IMR-90 (cell line): ENCODE measurements at regions of chr15 and their contacts with region 1.

Region 1: GRCh38 chr15:74615508-74616365 is at the start of gene CLK3:
- DNase-seq: peak; percentile 89
- ATAC-seq: peak; percentile 81
- H3K4me3 ChIP-seq: peak within 1 kb of the TSS; percentile 93
- H3K27ac ChIP-seq: peak within 1 kb of the TSS; percentile 87
- H3K4me1 ChIP-seq: peaks cover 6% of the 10 kb centered on the region
- H3K27me3 ChIP-seq: peaks cover 2% of the 10 kb centered on the region; the same call in 1 of the 2 replicates
- CTCF ChIP-seq: no peak
- POLR2A ChIP-seq: peak; percentile 83
- RAD21 ChIP-seq: no peak
- total RNA-seq, gene CLK3: 114 and 117 TPM in 2 replicates

Region 2: DNA sequence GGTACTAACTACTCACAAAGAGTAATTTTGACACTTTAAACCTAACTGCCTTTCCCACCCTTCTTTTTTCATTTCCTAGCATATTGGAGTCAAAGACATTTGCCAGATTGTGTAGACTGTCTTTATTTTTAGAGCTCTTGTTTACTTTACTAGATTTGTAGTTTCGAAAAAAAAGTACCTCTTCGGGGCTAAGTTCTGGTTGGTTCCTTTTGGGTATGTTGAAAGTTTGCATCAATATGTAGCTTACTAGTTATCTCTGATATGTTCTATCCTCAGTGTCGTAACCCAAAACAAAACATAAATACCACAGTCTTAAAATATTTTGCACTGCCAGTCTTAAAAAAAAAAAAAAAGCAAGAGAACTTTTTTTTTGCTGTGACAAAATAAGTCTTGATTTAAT is 1120.6 kb before region 1 on chr15:
- CTCF ChIA-PET with region 1: no interaction called
- POLR2A ChIA-PET with region 1: no interaction called
- dilution Hi-C with region 1: no loop called
- in situ Hi-C with region 1: no loop called
- intact Hi-C with region 1: no loop called
- DNase-seq: no peak
- ATAC-seq: no peak
- H3K4me3 ChIP-seq: no peak overlapping the region
- H3K27ac ChIP-seq: no peak overlapping the region
- H3K4me1 ChIP-seq: no peaks in the 10 kb centered on the region
- H3K27me3 ChIP-seq: peaks cover 9% of the 10 kb centered on the region
- CTCF ChIP-seq: no peak
- POLR2A ChIP-seq: no peak
- RAD21 ChIP-seq: no peak

Region 3: GRCh38 chr15:74545880-74546656 is 69.7 kb before region 1 on chr15:
- CTCF ChIA-PET with region 1: no interaction called
- POLR2A ChIA-PET with region 1: no interaction called
- dilution Hi-C with region 1: no loop called
- in situ Hi-C with region 1: no loop called
- intact Hi-C with region 1: loop called (anchors 1 kb)
- DNase-seq: peak; percentile 100
- ATAC-seq: peak; percentile 89
- H3K4me3 ChIP-seq: no peak overlapping the region
- H3K27ac ChIP-seq: no peak overlapping the region
- H3K4me1 ChIP-seq: peaks cover 4% of the 10 kb centered on the region
- H3K27me3 ChIP-seq: no peaks in the 10 kb centered on the region
- CTCF ChIP-seq: no peak
- POLR2A ChIP-seq: no peak; the same call in 1 of the 2 replicates
- RAD21 ChIP-seq: peak; percentile 13; the same call in 1 of the 2 replicates

Region 4: GRCh38 chr15:74573987-74574386 is 41.8 kb before region 1 on chr15:
- CTCF ChIA-PET with region 1: no interaction called
- POLR2A ChIA-PET with region 1: no interaction called
- dilution Hi-C with region 1: no loop called
- in situ Hi-C with region 1: no loop called
- intact Hi-C with region 1: no loop called
- DNase-seq: peak; percentile 56
- ATAC-seq: no peak
- H3K4me3 ChIP-seq: no peak overlapping the region
- H3K27ac ChIP-seq: no peak overlapping the region
- H3K4me1 ChIP-seq: peaks cover 5% of the 10 kb centered on the region
- H3K27me3 ChIP-seq: no peaks in the 10 kb centered on the region
- CTCF ChIP-seq: no peak
- POLR2A ChIP-seq: no peak
- RAD21 ChIP-seq: no peak